Common myeloid progenitor, CD34-positive (primary cell): ENCODE measurements at regions of chr2 and their contacts with region 1.

Region 1: GRCh38 chr2:105468582-105469042 is 69.8 kb upstream of the FHL2 start:
- DNase-seq: peak in 1 of 3 donors; percentile 13
- H3K4me3 ChIP-seq: peak overlapping the region in 1 of 7 experiments; percentile 39
- H3K27ac ChIP-seq: peak overlapping the region in 1 of 2 experiments; percentile 41
- H3K4me1 ChIP-seq: peaks cover 9 to 39% (median 38%) of the 10 kb centered on the region in 4 experiments
- H3K27me3 ChIP-seq: no peaks in the 10 kb centered on the region

Region 2: DNA sequence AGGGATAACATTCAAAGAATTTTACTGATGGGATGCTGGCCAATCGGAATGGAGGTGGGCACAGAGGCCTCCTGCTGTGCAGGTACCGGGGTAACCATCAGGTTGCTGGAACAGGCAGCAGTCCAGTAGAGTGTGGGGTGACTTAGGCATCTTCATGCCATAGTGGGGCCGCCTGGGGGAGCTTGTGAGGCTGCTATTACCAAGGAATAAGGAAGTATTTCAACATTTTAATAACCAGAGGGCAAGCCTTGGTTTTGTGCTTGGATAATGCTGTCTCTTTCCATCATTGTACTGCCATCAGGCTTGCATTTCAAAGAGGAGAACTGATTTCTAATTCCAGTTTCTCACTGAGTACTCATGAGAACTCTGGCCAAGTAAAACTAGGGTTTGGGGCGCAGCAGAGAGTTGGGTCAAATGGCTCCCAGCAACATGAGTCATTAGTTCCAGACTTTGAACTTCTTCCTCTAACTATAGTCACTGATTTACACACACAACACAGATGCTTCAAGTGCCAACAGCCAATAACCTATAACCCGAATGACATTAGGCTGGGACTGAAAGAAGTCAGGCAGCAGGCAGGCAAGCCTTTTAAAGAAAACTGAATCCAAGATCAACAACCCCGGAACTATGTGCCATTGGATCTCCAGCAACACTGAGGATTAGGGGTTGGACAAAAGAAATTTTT is 13.7 kb before region 1 on chr2:
- CTCF ChIA-PET with region 1: interaction called, 19 read pairs
- POLR2A ChIA-PET with region 1: no interaction called
- DNase-seq: peak; percentile 65 to 81 (median 79)
- H3K4me3 ChIP-seq: no peak overlapping the region
- H3K27ac ChIP-seq: no peak overlapping the region
- H3K4me1 ChIP-seq: peaks cover 0 to 15% (median 11%) of the 10 kb centered on the region in 4 experiments
- H3K27me3 ChIP-seq: no peaks in the 10 kb centered on the region

Region 3: DNA sequence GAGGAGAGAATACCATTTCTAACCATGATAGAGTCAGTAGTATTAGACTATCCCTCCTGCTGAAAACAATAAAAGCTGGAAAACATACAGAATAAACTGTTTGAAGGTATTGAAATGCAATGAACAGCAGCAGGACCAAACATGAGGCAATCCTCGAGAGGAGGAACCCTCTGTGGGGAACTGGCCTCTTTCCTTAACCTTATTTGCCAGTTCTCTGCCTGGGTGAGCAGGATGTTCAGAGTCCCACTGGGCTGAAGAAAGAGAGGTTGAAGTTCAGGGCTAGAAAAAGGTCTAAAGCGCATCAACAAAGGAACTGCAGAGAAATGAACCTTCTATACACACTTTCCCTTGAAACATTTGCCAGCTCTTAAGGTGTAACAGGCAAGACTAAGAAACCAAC is 10.1 kb after region 1 on chr2:
- CTCF ChIA-PET with region 1: no interaction called
- POLR2A ChIA-PET with region 1: no interaction called
- DNase-seq: no peak
- H3K4me3 ChIP-seq: no peak overlapping the region
- H3K27ac ChIP-seq: no peak overlapping the region
- H3K4me1 ChIP-seq: no peaks in the 10 kb centered on the region
- H3K27me3 ChIP-seq: no peaks in the 10 kb centered on the region

Region 4: GRCh38 chr2:105541189-105542050 is 72.8 kb after region 1 on chr2:
- CTCF ChIA-PET with region 1: no interaction called
- POLR2A ChIA-PET with region 1: no interaction called
- DNase-seq: no peak
- H3K4me3 ChIP-seq: no peak overlapping the region
- H3K27ac ChIP-seq: no peak overlapping the region
- H3K4me1 ChIP-seq: peaks cover 0 to 4% (median 3%) of the 10 kb centered on the region in 4 experiments
- H3K27me3 ChIP-seq: peaks cover 0 to 2% (median 0%) of the 10 kb centered on the region in 5 experiments

Region 5: GRCh38 chr2:105969555-105969954 is 500.9 kb after region 1 on chr2:
- CTCF ChIA-PET with region 1: no interaction called
- POLR2A ChIA-PET with region 1: no interaction called
- DNase-seq: peak in 2 of 3 donors; percentile 2 to 4
- H3K4me3 ChIP-seq: no peak overlapping the region
- H3K27ac ChIP-seq: no peak overlapping the region
- H3K4me1 ChIP-seq: no peaks in the 10 kb centered on the region
- H3K27me3 ChIP-seq: no peaks in the 10 kb centered on the region